Panc1 (cell line): ENCODE measurements at regions of chr1 and their contacts with region 1.

Region 1: DNA sequence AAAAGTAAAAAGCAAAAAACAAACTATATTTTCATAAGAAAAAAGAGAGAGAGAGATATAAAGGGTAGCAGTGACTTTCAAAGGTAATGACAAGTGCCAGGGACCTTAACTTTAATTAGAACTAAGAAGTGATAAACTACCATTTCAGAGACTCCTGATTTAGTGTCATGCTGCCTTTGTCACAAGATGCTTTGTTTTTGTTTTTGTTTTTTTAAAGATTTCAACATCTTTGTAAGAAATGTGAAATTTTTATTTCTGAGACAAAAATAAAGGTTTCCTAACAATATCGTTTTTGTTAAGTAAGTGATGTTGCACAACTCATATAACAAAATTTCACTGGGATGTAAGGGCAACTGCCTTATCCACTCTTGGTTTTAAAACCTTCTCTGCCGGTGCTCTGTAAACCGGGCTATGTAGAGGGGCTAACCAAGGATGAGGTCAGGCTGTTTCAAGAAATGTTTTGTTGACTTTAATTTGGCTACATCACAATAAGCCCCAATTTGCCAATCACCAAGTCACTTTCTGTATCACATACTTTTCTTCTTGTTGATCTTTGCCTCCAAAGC is 35.2 kb upstream of the SYT2 start:
- DNase-seq: no peak
- ATAC-seq: no peak
- H3K4me3 ChIP-seq: no peak overlapping the region
- H3K27ac ChIP-seq: no peak overlapping the region
- H3K4me1 ChIP-seq: no peaks in the 10 kb centered on the region
- H3K27me3 ChIP-seq: no peaks in the 10 kb centered on the region
- CTCF ChIP-seq: no peak

Region 2: GRCh38 chr1:202871366-202871765 is 126.0 kb after region 1 on chr1:
- CTCF ChIA-PET with region 1: no interaction called
- POLR2A ChIA-PET with region 1: interaction called, 10 read pairs
- in situ Hi-C with region 1: no loop called
- intact Hi-C with region 1: no loop called
- DNase-seq: no peak
- ATAC-seq: no peak
- H3K4me3 ChIP-seq: no peak overlapping the region
- H3K27ac ChIP-seq: no peak overlapping the region
- H3K4me1 ChIP-seq: no peaks in the 10 kb centered on the region
- H3K27me3 ChIP-seq: no peaks in the 10 kb centered on the region
- CTCF ChIP-seq: no peak

Region 3: GRCh38 chr1:202926720-202927491 is 181.5 kb after region 1 on chr1 and contains the start of gene KLHL12:
- CTCF ChIA-PET with region 1: no interaction called
- POLR2A ChIA-PET with region 1: no interaction called
- in situ Hi-C with region 1: no loop called
- intact Hi-C with region 1: no loop called
- DNase-seq: peak; percentile 85
- ATAC-seq: peak; percentile 99
- H3K4me3 ChIP-seq: peak within 1 kb of the TSS; percentile 81 to 98
- H3K27ac ChIP-seq: peak within 1 kb of the TSS; percentile 97
- H3K4me1 ChIP-seq: peaks cover 6% of the 10 kb centered on the region; the same call in 1 of the 2 replicates
- H3K27me3 ChIP-seq: no peaks in the 10 kb centered on the region
- CTCF ChIP-seq: peak; percentile 73
- total RNA-seq, gene KLHL12: 37.8 TPM